Activated CD4-positive, alpha-beta memory T cell treated with anti-CD3 and anti-CD28 coated beads for 36 hours (primary cell): ENCODE measurements at regions of chr2 and their contacts with region 1.

Region 1: DNA sequence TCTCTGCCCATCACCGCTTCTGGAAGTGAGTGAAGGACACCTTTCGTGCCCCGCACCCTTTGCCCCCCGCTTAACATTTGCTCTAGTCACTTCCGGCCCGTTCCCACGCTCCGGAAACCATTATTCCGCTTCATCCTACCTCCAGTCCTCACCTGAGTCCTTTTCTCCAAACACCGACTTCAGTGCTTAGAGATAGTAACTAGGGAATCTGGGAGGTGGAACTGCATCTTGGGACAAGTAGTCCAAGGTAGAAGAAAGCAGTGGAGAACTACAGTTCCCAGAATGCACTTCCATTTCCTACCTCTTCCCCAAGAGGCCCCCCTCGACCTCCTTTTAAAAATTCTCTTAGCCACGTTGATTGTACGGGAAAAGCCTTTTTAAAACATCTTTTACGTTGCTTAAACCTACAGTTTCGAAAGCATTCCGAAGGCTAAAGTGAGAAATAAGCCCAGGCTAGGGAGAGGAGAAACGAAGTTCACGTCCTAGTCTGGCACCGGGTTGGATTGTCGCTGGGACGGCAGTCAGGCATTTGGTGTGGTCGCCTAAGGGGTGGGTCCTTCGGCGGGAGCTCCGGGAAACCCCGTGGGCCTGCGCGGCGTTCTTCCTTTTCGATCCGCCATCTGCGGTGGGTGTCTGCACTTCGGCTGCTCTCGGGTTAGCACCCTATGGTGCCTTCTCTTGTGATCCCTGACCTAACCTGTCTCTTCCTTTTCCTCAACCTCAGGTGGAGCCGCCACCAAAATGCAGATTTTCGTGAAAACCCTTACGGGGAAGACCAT is at the starts of genes CLHC1 and RPS27A:
- DNase-seq: peak; percentile 95
- H3K4me3 Mint-ChIP-seq: peak within 1 kb of the TSS; percentile 96
- H3K27ac Mint-ChIP-seq: peak within 1 kb of the TSS; percentile 94
- H3K4me1 Mint-ChIP-seq: peaks cover 60% of the 10 kb centered on the region
- H3K27me3 Mint-ChIP-seq: no peaks in the 10 kb centered on the region
- total RNA-seq, gene CLHC1: 5.5 to 7.5 TPM
- total RNA-seq, gene RPS27A: 1,372 to 1,402 TPM

Region 2: DNA sequence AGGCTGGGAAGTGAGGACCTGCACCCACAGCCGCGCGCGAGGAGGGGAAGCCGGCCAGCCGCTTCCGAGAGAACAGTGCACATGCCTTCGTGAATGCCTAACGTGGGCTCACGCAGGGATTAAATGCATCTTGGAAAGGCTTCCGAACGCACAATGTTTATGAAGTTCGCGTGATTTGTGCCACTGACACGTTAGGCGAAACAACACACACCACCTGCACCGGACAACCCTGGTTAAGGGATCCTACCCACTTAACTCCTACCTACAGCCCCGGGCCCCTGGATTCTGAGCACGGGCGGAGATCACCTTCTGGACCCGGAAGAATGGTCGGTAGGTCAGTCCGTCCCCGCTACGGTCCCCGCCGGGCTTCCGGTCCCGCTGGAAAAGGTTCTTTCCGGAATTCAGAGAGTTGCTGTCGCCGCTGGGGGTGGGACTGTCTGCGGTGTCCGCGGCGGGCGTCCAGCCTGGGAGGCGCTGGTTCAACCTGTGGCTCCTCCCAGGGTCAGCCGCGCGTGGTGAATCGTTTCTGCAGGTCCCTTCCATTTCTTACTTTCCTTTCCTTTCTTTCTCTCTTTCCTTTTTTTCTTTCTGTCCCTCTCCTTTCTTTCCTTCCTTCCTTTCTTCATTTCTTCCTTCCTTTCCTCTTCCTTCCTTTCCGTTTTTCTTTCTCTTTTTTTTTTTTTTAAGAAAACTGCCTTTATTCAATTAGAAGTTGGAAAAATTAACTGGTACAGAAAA is 36.8 kb after region 1 on chr2 and contains the start of gene MTIF2:
- CTCF ChIA-PET with region 1: no interaction called
- POLR2A ChIA-PET with region 1: no interaction called
- intact Hi-C with region 1: loop called (anchors 1 kb)
- DNase-seq: peak; percentile 95
- H3K4me3 Mint-ChIP-seq: peak within 1 kb of the TSS; percentile 93
- H3K27ac Mint-ChIP-seq: peak within 1 kb of the TSS; percentile 88
- H3K4me1 Mint-ChIP-seq: peaks cover 7% of the 10 kb centered on the region
- H3K27me3 Mint-ChIP-seq: peaks cover 2% of the 10 kb centered on the region
- total RNA-seq, gene MTIF2: 42.7 to 43.2 TPM

Region 3: DNA sequence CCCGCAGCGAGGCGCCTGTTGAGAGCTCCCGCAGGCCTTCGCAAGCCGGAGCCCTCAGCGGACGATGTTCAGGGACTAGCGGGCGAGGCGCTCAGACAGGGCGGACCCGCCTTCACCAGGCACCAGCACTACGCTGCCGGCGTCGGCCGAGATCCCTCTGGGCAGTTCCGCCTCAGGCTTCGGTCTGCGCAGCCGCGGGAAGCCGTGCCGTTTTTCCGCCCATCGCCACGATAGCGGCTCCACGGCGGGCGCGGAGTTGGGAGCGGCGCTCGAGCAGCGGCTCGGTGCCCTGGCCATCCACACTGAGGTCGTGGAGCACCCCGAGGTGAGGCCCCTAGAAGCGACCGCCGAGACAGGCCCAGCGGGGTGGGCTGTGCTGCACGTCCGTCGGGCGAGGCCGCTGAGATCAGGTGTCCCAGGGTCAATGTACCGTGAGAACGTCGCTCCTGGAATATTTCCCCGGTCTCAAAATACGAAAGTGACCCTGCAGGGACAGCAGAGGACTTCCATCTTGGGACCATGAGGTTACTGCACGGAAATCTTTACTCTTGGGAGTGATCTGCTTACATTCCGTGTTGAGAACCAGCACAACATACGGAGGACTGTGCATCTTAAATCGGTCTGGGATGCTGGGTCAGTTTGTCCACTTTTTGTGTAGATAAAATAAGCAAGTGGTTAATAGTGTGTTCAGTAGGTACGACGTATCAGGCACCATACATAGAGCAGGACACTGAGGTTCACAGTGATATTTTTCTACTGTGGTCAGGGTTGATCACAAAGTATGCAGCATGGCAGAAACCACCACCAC is 50.0 kb after region 1 on chr2:
- CTCF ChIA-PET with region 1: no interaction called
- POLR2A ChIA-PET with region 1: no interaction called
- intact Hi-C with region 1: loop called (anchors 5 kb)
- DNase-seq: peak; percentile 90
- H3K4me3 Mint-ChIP-seq: peak overlapping the region; percentile 84
- H3K27ac Mint-ChIP-seq: peak overlapping the region; percentile 91
- H3K4me1 Mint-ChIP-seq: peaks cover 22% of the 10 kb centered on the region
- H3K27me3 Mint-ChIP-seq: no peaks in the 10 kb centered on the region

Region 4: GRCh38 chr2:55311444-55311870 is 79.2 kb after region 1 on chr2:
- CTCF ChIA-PET with region 1: no interaction called
- POLR2A ChIA-PET with region 1: no interaction called
- intact Hi-C with region 1: loop called (anchors 1 kb)
- DNase-seq: peak; percentile 65
- H3K4me3 Mint-ChIP-seq: no peak overlapping the region
- H3K27ac Mint-ChIP-seq: no peak overlapping the region
- H3K4me1 Mint-ChIP-seq: peaks cover 22% of the 10 kb centered on the region
- H3K27me3 Mint-ChIP-seq: no peaks in the 10 kb centered on the region